T-cell (primary cell): ENCODE measurements at regions of chr11 and their contacts with region 1.

Region 1: DNA sequence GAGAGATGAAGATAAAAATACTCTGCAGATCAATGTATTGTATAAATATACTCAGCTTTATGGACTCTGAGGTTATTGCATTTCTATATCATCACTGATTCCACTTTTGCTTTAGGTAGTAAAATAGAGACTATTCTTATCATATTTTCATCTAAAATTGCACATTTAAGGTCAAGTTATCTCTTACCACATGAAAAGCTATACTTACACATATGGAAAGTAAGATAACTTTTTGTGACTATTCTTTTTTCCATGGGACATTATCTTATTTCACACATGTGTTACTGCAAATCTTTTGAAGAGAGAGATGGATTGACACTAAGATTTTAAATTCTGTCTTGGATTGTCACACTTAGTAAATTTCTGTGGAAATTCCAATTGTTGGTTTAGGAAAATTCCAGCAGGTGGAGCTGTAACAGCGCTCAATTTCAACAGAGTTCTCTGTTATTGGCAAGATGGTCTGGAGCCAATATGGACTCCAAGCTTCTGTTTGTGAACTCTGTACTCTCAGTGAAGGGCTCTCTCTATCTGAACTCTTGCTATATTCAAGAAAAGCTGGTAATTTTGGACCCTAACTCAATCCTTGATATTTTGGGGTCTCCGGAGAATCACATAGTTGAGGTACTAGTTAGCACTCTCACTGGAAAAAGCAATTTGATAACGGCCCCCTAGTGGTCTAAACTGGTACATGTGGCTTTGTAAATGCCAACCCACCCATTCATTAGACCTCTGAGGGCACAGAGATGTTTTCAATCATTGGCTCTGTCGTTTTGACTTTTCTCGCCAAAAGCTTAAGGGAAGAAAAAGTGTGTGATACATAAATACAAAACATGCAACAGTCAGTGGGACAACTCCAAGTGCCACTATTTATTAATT is 429.7 kb downstream of the ETS1 start:
- DNase-seq: peak in 34 of 35 experiments; percentile 1 to 84 (median 42)
- ATAC-seq: peak; percentile 87 to 93 (median 88)
- H3K4me3 ChIP-seq: peak overlapping the region; percentile 25 to 32
- H3K4me3 Mint-ChIP-seq: peak overlapping the region; percentile 51 to 76 (median 59)
- H3K27ac ChIP-seq: no peak overlapping the region
- H3K27ac Mint-ChIP-seq: peak overlapping the region; percentile 65 to 75
- H3K4me1 ChIP-seq: no peaks in the 10 kb centered on the region
- H3K4me1 Mint-ChIP-seq: peaks cover 0 to 9% (median 3%) of the 10 kb centered on the region in 3 donors
- H3K27me3 ChIP-seq: no peaks in the 10 kb centered on the region
- H3K27me3 Mint-ChIP-seq: no peaks in the 10 kb centered on the region

Region 2: DNA sequence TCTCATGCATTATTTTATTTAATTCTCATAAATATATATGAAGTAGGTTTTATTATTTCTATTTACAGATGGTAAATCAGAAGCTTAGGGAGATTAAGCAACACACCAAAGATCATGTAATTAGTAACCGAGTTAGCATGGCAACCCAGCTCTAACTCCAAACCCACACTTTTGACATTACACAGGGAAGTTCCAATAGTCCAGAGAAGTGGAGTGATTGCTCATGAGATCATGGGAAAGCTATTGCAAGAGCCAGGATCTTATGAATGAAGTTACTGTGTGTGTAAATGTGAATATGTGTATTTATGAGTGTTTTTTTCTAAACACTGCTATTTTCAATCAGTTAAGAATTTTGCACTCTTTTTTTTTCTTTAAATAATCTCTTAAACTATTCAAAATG is 931.3 kb before region 1 on chr11:
- CTCF ChIA-PET with region 1: no interaction called
- POLR2A ChIA-PET with region 1: no interaction called
- DNase-seq: no peak
- ATAC-seq: no peak
- H3K4me3 ChIP-seq: no peak overlapping the region
- H3K4me3 Mint-ChIP-seq: no peak overlapping the region
- H3K27ac ChIP-seq: no peak overlapping the region
- H3K27ac Mint-ChIP-seq: no peak overlapping the region
- H3K4me1 ChIP-seq: no peaks in the 10 kb centered on the region
- H3K4me1 Mint-ChIP-seq: no peaks in the 10 kb centered on the region
- H3K27me3 ChIP-seq: no peaks in the 10 kb centered on the region
- H3K27me3 Mint-ChIP-seq: peaks cover 0 to 5% of the 10 kb centered on the region in 2 donors

Region 3: DNA sequence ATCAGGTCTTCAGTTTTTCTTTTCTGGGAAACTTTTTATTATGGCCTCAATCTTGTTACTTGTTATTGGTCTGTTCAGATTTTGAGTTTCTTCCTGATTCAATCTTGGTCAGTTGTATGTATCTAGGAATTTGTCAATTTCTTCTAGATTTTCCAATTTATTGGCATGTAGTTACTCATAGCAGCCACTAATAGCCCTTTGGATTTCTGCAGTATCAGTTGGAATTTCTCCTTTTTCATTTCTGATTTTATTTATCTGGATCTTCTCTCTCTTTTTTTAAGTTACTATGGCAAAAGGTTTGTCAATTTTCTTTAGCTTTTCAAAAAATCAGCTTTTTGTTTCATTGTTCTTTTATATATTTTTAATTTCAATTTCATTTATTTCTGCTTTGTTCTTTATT is 737.5 kb before region 1 on chr11:
- CTCF ChIA-PET with region 1: no interaction called
- POLR2A ChIA-PET with region 1: no interaction called
- DNase-seq: no peak
- ATAC-seq: no peak
- H3K4me3 ChIP-seq: no peak overlapping the region
- H3K4me3 Mint-ChIP-seq: no peak overlapping the region
- H3K27ac ChIP-seq: no peak overlapping the region
- H3K27ac Mint-ChIP-seq: no peak overlapping the region
- H3K4me1 ChIP-seq: no peaks in the 10 kb centered on the region
- H3K4me1 Mint-ChIP-seq: no peaks in the 10 kb centered on the region
- H3K27me3 ChIP-seq: no peaks in the 10 kb centered on the region
- H3K27me3 Mint-ChIP-seq: no peaks in the 10 kb centered on the region

Region 4: DNA sequence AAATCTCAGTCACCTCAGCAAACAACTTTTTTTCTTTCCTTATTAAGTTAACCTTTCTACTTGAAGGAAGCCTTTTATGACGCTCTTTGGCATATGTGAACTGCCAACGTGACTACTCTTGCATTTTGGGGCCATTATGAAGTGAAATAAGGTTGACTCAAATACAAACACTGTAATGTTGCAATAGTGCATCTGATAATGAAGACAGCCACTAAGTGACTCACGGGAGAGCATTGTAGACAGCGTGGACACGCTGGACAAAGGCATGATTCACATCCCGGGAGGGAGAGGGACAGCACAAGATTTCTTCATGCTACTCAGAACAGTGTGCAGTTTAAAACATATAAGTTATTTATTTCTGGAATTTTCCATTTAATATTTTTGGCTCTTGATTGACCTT is 131.1 kb before region 1 on chr11:
- CTCF ChIA-PET with region 1: interaction called, 16 to 27 read pairs
- POLR2A ChIA-PET with region 1: no interaction called
- DNase-seq: no peak
- ATAC-seq: no peak
- H3K4me3 ChIP-seq: no peak overlapping the region
- H3K4me3 Mint-ChIP-seq: no peak overlapping the region
- H3K27ac ChIP-seq: no peak overlapping the region
- H3K27ac Mint-ChIP-seq: no peak overlapping the region
- H3K4me1 ChIP-seq: peaks cover 0 to under 1% of the 10 kb centered on the region in 2 experiments
- H3K4me1 Mint-ChIP-seq: peaks cover 0 to 3% (median 2%) of the 10 kb centered on the region in 3 donors
- H3K27me3 ChIP-seq: peaks cover 0 to 2% of the 10 kb centered on the region in 2 experiments
- H3K27me3 Mint-ChIP-seq: peaks cover 6 to 11% of the 10 kb centered on the region in 2 donors

Region 5: DNA sequence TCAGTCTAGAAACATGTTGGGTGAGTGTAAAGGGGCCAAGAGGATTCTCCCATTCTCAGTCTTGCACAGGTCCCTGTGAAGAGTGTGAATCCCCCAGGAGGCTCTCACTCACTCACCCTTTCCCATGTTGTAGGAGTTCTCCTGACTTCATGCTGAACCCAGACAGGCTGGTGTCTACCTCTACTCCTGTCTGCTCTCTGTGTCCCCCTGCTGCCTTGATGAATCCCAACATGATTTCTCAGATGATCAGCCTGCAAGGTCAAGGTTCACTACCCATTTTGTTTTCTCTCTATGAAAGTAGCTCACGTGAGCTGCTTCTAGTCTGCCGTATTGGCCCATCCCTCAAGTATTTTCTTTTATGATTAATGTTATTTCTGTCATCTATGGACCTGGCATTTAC is 70.9 kb before region 1 on chr11:
- CTCF ChIA-PET with region 1: interaction called, 3 to 11 read pairs
- POLR2A ChIA-PET with region 1: no interaction called
- DNase-seq: peak in 14 of 35 experiments; percentile 1 to 49 (median 6)
- ATAC-seq: peak in 3 of 4 experiments; percentile 50 to 61 (median 61)
- H3K4me3 ChIP-seq: no peak overlapping the region
- H3K4me3 Mint-ChIP-seq: peak overlapping the region in 1 of 3 donors; percentile 23
- H3K27ac ChIP-seq: no peak overlapping the region
- H3K27ac Mint-ChIP-seq: peak overlapping the region; percentile 29 to 72
- H3K4me1 ChIP-seq: peaks cover 16 to 18% of the 10 kb centered on the region in 2 experiments
- H3K4me1 Mint-ChIP-seq: peaks cover 39 to 49% (median 42%) of the 10 kb centered on the region in 3 donors
- H3K27me3 ChIP-seq: no peaks in the 10 kb centered on the region
- H3K27me3 Mint-ChIP-seq: no peaks in the 10 kb centered on the region

Region 6: GRCh38 chr11:128172046-128172878 is 14.6 kb after region 1 on chr11:
- CTCF ChIA-PET with region 1: interaction called, 8 to 29 read pairs
- POLR2A ChIA-PET with region 1: interaction called in 1 of 2 experiments, 3 read pairs
- DNase-seq: peak; percentile 60 to 93 (median 81)
- ATAC-seq: peak; percentile 50 to 78 (median 72)
- H3K4me3 ChIP-seq: no peak overlapping the region
- H3K4me3 Mint-ChIP-seq: no peak overlapping the region
- H3K27ac ChIP-seq: no peak overlapping the region
- H3K27ac Mint-ChIP-seq: no peak overlapping the region
- H3K4me1 ChIP-seq: no peaks in the 10 kb centered on the region
- H3K4me1 Mint-ChIP-seq: peaks cover 0 to 5% (median 3%) of the 10 kb centered on the region in 3 donors
- H3K27me3 ChIP-seq: no peaks in the 10 kb centered on the region
- H3K27me3 Mint-ChIP-seq: no peaks in the 10 kb centered on the region

Region 7: GRCh38 chr11:128776424-128777284 is 619.0 kb after region 1 on chr11:
- CTCF ChIA-PET with region 1: interaction called, 6 to 12 read pairs
- POLR2A ChIA-PET with region 1: no interaction called
- DNase-seq: peak in 33 of 35 experiments; percentile 4 to 77 (median 23)
- ATAC-seq: peak; percentile 46 to 64 (median 62)
- H3K4me3 ChIP-seq: no peak overlapping the region
- H3K4me3 Mint-ChIP-seq: peak overlapping the region in 1 of 3 donors; percentile 56
- H3K27ac ChIP-seq: peak overlapping the region; percentile 7
- H3K27ac Mint-ChIP-seq: peak overlapping the region in 1 of 2 donors; percentile 64
- H3K4me1 ChIP-seq: peaks cover 5 to 47% of the 10 kb centered on the region in 2 experiments
- H3K4me1 Mint-ChIP-seq: peaks cover 68 to 79% (median 72%) of the 10 kb centered on the region in 3 donors
- H3K27me3 ChIP-seq: no peaks in the 10 kb centered on the region
- H3K27me3 Mint-ChIP-seq: no peaks in the 10 kb centered on the region

Region 8: GRCh38 chr11:128831174-128832120 is 673.8 kb after region 1 on chr11:
- CTCF ChIA-PET with region 1: interaction called, 18 to 53 read pairs
- POLR2A ChIA-PET with region 1: no interaction called
- DNase-seq: peak; percentile 61 to 94 (median 82)
- ATAC-seq: peak; percentile 72 to 86 (median 86)
- H3K4me3 ChIP-seq: peak overlapping the region in 1 of 2 donors; percentile 33
- H3K4me3 Mint-ChIP-seq: peak overlapping the region; percentile 57 to 76 (median 67)
- H3K27ac ChIP-seq: peak overlapping the region; percentile 93
- H3K27ac Mint-ChIP-seq: peak overlapping the region; percentile 91 to 92
- H3K4me1 ChIP-seq: peaks cover 6 to 18% of the 10 kb centered on the region in 2 experiments
- H3K4me1 Mint-ChIP-seq: peaks cover 23 to 34% (median 25%) of the 10 kb centered on the region in 3 donors
- H3K27me3 ChIP-seq: no peaks in the 10 kb centered on the region
- H3K27me3 Mint-ChIP-seq: no peaks in the 10 kb centered on the region

Region 9: DNA sequence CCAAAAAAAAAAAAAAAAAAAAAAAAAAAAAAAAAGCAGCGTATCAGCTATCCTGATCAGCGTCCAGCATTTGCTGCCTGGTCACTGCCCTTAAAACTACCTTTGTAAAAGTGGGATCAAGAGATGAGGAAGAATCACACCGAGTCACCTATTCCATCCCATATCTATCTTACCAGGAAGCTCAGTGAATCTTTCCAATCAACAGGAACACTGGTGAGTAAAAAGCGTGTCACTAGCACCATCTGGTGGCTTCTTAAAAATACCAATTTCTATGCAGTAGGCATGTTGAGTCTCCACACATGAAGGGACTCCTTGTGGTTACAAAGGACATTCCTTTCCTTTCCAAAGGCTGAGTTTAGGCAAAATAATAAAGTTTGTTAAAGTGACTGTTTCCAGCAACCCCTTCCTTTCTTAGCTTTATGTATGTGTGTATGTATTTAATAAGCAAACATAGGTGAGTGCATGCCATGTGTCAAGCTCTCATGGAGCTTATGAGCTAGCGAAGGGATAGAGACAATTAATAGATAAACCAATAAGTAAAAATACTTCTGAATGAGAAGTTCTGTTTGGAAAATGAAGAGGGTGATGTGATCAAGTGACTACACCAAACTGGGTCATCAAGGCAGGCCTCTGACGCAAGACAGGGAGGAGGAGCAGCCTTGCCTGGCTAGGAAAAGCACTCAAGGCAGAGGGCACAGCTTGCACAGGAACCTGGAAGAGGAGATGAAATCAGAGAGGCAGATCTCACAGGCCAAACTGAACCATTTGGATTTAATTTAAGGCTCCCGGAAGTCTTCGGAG is 798.9 kb after region 1 on chr11:
- CTCF ChIA-PET with region 1: interaction called, 3 to 11 read pairs
- POLR2A ChIA-PET with region 1: no interaction called
- DNase-seq: peak in 4 of 35 experiments; percentile 3 to 65 (median 17)
- ATAC-seq: peak in 1 of 4 experiments; percentile 42
- H3K4me3 ChIP-seq: no peak overlapping the region
- H3K4me3 Mint-ChIP-seq: peak overlapping the region in 1 of 3 donors; percentile 4
- H3K27ac ChIP-seq: no peak overlapping the region
- H3K27ac Mint-ChIP-seq: no peak overlapping the region
- H3K4me1 ChIP-seq: no peaks in the 10 kb centered on the region
- H3K4me1 Mint-ChIP-seq: peaks cover 0 to 2% (median 2%) of the 10 kb centered on the region in 3 donors
- H3K27me3 ChIP-seq: peaks cover 0 to 10% of the 10 kb centered on the region in 2 experiments
- H3K27me3 Mint-ChIP-seq: peaks cover 17 to 20% of the 10 kb centered on the region in 2 donors